ENCODE measurements at regions of chr7 and their contacts with region 1.

Region 1: DNA sequence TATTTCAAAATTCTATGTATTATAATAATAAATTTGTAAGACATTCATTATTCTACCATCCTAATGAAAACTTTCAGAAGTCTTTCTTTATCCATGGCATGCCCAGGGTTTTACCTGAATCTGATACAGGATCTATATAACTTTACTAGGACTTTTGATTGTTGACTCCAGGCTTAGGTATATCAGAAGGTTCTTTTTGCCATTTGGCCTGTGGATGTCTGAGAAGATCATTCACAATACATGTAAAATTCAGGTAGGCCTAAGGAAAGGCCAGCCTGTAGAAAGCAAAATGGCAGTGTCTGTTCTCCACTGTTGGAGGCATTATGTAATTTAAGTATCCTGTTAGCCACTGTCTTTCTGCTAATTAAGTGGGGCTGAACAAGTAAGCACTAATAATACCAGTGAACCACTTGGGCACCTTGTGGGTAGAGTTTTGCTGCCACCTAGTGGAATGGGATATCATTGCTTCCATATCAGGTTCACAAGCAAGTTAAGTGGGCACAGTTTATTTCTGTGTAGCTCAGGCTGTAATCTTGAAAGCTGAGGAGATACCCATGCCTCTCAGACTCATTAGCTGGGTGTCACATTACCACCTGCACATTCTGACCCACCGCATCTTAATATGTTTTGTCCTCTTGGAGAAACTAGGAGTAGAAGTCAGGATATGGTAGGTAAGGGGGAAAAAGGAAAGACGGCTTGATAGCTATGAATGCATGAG is 105.5 kb downstream of the SEPTIN7 start:
- DNase-seq: peak; percentile 69
- H3K4me3 ChIP-seq: no peak overlapping the region
- H3K27ac ChIP-seq: no peak overlapping the region
- H3K4me1 ChIP-seq: no peaks in the 10 kb centered on the region
- H3K27me3 ChIP-seq: no peaks in the 10 kb centered on the region
- CTCF ChIP-seq: peak; percentile 89

Region 2: GRCh38 chr7:35454575-35455385 is 451.6 kb before region 1 on chr7:
- intact Hi-C with region 1: no loop called
- DNase-seq: no peak
- H3K4me3 ChIP-seq: no peak overlapping the region
- H3K27ac ChIP-seq: no peak overlapping the region
- H3K4me1 ChIP-seq: no peaks in the 10 kb centered on the region
- H3K27me3 ChIP-seq: no peaks in the 10 kb centered on the region
- CTCF ChIP-seq: no peak

Region 3: DNA sequence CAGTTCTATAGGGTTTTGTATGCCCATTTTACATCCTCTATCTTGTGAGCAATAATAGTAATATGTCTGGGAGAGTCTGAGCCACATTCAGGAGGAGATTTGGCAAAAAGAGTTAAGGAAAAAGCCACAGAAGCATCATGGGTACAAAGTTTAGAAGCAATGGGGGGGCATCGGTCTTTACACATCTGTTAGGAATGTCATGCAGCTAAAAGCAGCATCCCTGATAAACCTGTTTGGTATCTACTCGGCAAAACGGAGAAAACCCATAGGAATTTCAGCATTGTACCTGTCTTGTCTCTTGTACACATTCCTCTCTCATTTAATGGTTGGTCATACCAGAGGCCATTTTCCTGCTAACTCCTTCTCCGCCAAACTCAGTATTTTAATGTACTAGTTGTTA is 198.9 kb before region 1 on chr7:
- intact Hi-C with region 1: loop called (anchors 2 kb)
- DNase-seq: no peak
- H3K4me3 ChIP-seq: no peak overlapping the region
- H3K27ac ChIP-seq: no peak overlapping the region
- H3K4me1 ChIP-seq: no peaks in the 10 kb centered on the region
- H3K27me3 ChIP-seq: no peaks in the 10 kb centered on the region
- CTCF ChIP-seq: no peak

Region 4: DNA sequence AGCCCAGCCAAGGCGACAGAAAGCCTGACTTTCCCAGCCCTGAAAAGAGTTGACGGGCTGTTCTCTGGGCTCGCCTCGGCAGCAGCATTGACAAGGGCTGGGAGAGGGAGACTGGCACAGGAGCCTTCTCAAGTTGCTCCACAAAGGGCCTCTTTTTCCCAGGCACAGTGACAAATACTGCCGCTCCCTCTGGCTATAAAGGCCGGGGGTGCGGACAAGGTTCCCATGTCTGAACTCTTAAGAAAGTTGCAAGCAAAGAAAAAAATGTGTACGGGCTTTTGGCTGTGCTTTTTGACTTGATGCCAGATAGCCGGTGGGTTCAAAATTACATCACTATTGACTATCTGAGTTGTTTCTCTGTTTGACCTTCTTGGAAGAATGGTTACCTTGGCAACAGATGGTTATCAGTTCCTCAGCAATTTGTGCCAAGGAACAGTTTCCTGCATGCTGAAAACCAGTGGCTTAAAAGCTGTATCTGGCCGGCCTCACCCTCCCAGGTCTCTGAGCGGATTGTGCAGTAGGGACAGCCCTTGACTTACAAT is 130.8 kb after region 1 on chr7:
- intact Hi-C with region 1: no loop called
- DNase-seq: peak; percentile 34
- H3K4me3 ChIP-seq: no peak overlapping the region
- H3K27ac ChIP-seq: no peak overlapping the region
- H3K4me1 ChIP-seq: no peaks in the 10 kb centered on the region
- H3K27me3 ChIP-seq: no peaks in the 10 kb centered on the region
- CTCF ChIP-seq: no peak

Region 5: DNA sequence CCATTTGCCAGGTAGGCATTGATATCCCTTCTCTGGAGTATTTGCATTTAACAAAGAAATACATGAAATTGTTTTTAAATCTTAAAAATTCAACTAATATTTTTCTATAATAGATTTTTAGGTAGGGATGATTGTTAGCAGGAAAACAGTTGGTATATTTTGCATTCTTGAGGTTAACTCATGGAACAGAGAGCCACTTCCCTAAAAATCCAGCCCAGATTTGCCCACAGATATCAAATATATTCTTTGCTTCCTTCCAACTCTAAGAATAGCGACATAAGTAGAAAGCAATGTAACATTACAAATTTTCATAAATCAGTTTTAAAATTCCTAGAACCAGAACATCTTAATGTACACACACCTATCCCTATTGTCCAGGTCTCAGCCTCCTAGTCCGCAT is 438.3 kb after region 1 on chr7:
- intact Hi-C with region 1: no loop called
- DNase-seq: no peak
- H3K4me3 ChIP-seq: no peak overlapping the region
- H3K27ac ChIP-seq: no peak overlapping the region
- H3K4me1 ChIP-seq: no peaks in the 10 kb centered on the region
- H3K27me3 ChIP-seq: no peaks in the 10 kb centered on the region
- CTCF ChIP-seq: no peak

Measured in colonic mucosa (tissue), 4 donors.